ENCODE measurements at regions of chr12 and their contacts with region 1.

Region 1: GRCh38 chr12:53746592-53747092 is 5.1 kb downstream of the CISTR start:
- DNase-seq: peak; percentile 88 to 93
- H3K4me3 ChIP-seq: no peak overlapping the region
- H3K4me3 Mint-ChIP-seq: no peak overlapping the region
- H3K27ac Mint-ChIP-seq: no peak overlapping the region
- H3K4me1 ChIP-seq: no peaks in the 10 kb centered on the region
- H3K4me1 Mint-ChIP-seq: no peaks in the 10 kb centered on the region
- H3K27me3 ChIP-seq: no peaks in the 10 kb centered on the region; the same call in 1 of the 2 replicates
- H3K27me3 Mint-ChIP-seq: peaks cover 16% of the 10 kb centered on the region
- CTCF ChIP-seq: peak; percentile 98 to 99

Region 2: DNA sequence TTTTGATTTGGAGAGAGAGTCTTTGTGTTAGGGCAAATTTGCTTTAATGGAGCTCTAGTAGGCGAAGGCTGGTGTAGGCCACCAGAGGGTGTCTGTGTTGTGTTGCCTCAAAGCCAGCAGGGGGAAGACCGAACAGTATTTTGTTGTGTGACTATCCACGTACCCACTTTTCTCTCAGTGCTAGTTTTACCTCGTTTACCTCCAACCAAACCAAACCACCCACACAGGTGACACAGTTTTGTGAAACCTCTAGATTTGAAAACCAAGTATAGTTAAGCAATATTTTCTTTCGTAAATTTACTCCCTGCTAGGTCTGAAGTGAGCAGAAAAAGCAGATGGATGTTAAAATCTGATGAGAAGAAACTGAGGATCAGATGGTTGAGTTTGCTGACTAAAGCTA is 203.1 kb before region 1 on chr12:
- CTCF ChIA-PET with region 1: interaction called, 5 read pairs
- POLR2A ChIA-PET with region 1: no interaction called
- intact Hi-C with region 1: loop called (anchors 2 kb)
- DNase-seq: peak; percentile 57 to 59
- H3K4me3 ChIP-seq: no peak overlapping the region
- H3K4me3 Mint-ChIP-seq: no peak overlapping the region
- H3K27ac Mint-ChIP-seq: no peak overlapping the region
- H3K4me1 ChIP-seq: peaks cover 9% of the 10 kb centered on the region
- H3K4me1 Mint-ChIP-seq: no peaks in the 10 kb centered on the region
- H3K27me3 ChIP-seq: no peaks in the 10 kb centered on the region
- H3K27me3 Mint-ChIP-seq: no peaks in the 10 kb centered on the region
- CTCF ChIP-seq: peak; percentile 61 to 94

Region 3: DNA sequence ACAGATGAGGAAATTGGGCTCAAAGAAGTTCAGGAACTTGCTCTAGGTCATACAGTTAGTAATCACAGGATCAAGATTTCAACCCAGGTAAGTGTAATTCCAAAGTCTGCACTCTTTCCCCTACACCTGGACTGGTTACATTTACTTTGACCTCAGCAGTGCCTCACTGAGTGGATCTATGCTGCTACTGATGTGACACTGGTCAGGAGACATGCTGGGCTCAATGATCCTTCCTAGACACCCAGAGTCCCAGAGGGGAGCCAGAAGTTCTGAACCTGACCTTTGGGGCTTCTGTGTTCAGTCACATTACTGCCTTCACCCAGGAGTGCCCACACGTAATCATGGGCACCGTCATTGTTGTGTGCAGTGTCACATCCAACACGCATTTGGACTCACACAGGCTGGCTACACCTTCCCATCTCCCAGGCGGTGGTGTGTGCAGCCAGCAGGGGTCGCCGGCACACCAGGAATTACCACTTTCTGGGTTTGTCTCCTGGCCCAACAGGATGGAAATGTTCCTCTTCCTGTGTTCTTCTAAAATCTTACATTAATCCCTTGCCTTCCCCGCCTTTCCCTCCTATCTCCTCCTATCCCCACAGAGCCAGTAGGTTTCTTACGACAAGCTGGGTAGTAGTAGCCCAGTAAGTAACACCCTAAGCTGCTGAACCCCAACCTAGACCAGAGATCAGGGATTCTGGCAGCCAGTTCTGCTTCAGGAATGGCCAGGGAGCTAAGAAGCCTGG is 45.0 kb before region 1 on chr12:
- CTCF ChIA-PET with region 1: interaction called, 54 read pairs
- POLR2A ChIA-PET with region 1: interaction called, 4 read pairs
- intact Hi-C with region 1: loop called (anchors 1 kb)
- DNase-seq: peak; percentile 75 to 85
- H3K4me3 ChIP-seq: no peak overlapping the region
- H3K4me3 Mint-ChIP-seq: no peak overlapping the region
- H3K27ac Mint-ChIP-seq: no peak overlapping the region
- H3K4me1 ChIP-seq: no peaks in the 10 kb centered on the region; the same call in 1 of the 2 replicates
- H3K4me1 Mint-ChIP-seq: peaks cover 4% of the 10 kb centered on the region
- H3K27me3 ChIP-seq: no peaks in the 10 kb centered on the region; the same call in 1 of the 2 replicates
- H3K27me3 Mint-ChIP-seq: peaks cover 25% of the 10 kb centered on the region
- CTCF ChIP-seq: peak; percentile 89 to 93

Region 4: DNA sequence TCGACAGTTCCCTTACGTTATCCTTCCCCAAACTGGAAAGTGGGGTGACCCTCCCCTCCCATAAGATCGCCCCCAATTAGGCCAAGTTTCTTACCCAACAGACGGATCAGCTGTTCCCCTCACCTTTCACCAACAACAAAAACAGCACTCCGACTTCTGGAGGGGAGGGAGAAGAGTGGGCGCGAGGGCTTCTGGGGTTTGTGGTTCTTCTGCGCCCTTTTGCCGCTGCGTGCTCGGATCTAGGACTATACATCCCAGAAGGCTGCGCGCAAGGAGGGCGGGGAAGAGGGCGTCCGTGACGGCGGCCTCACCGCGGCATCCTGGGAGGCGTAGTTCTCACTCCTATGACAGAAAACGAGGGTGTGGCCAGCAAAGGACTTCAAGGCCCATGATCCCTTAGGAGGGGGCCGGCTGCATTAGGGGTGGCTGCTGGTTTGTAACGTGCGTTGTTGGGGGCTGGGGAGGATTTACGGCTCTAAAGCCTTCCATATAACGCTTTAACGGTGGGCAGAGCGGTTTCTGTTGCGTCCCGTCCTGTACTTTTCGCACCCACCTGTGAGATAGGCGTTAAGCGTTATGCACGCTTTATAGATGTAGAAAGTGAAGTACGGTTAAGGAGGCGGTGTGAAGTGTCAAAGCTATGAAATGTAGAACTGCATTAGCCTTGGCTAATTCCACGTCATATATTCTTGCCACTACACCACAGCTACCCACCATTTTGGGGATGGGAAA is 19.2 kb before region 1 on chr12 and contains the start of gene CALCOCO1:
- CTCF ChIA-PET with region 1: interaction called, 10 read pairs
- POLR2A ChIA-PET with region 1: no interaction called
- intact Hi-C with region 1: no loop called
- DNase-seq: peak; percentile 95 to 96
- H3K4me3 ChIP-seq: peak within 1 kb of the TSS; percentile 57
- H3K4me3 Mint-ChIP-seq: peak within 1 kb of the TSS; percentile 94
- H3K27ac Mint-ChIP-seq: peak within 1 kb of the TSS; percentile 99
- H3K4me1 ChIP-seq: peaks cover 20% of the 10 kb centered on the region
- H3K4me1 Mint-ChIP-seq: peaks cover 11% of the 10 kb centered on the region
- H3K27me3 ChIP-seq: no peaks in the 10 kb centered on the region
- H3K27me3 Mint-ChIP-seq: no peaks in the 10 kb centered on the region
- CTCF ChIP-seq: no peak
- total RNA-seq, gene CALCOCO1: 19.3 and 21.4 TPM in 2 replicates

Measured in Caco-2 (cell line).